ENCODE measurements at regions of chr6 and their contacts with region 1.

Region 1: DNA sequence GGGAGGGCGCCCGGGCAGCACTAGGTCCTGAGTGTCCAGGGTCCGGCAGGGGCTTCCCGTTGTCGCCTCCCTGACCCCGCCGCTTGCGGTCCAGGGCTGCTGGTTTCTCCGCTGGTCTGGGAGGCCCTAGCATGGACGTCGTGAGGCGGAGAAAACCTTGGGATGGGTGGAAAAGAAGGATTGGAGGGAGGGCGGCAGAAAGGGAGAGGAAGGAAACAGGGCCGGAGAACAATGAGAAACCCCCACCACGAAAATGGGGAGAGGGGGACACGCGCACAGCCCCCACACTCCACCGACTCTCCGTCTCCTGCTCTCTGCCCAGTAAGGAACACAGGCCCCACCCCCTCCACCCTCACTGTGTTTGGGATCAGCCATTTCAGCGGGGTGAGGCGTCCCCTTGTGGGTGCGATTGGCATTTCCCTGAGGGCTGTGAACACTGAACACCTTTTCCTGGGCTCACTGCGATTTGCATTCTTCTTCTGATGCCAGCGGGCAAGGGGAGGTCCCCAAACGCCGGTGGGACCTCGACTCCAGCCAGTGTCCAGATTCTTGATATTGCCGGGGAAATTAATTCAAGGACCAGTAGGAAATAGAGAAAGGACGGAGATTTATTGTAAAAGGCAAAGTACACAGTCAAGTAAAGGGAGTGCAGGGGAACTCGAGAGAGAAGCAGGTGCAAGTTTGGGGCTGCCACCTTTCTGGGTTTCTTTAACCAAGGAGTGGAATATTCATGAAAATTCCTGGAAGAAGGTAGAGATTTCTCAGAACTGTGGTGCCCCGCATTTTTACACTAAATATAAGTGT is 3.3 kb upstream of the RAET1G start:
- DNase-seq: peak; percentile 75
- H3K4me3 ChIP-seq: peak overlapping the region; percentile 14 to 44 (median 35)
- H3K27ac ChIP-seq: no peak overlapping the region
- H3K4me1 ChIP-seq: peaks cover 18% of the 10 kb centered on the region
- H3K27me3 ChIP-seq: no peaks in the 10 kb centered on the region
- CTCF ChIP-seq: peak; percentile 91 to 97

Region 2: DNA sequence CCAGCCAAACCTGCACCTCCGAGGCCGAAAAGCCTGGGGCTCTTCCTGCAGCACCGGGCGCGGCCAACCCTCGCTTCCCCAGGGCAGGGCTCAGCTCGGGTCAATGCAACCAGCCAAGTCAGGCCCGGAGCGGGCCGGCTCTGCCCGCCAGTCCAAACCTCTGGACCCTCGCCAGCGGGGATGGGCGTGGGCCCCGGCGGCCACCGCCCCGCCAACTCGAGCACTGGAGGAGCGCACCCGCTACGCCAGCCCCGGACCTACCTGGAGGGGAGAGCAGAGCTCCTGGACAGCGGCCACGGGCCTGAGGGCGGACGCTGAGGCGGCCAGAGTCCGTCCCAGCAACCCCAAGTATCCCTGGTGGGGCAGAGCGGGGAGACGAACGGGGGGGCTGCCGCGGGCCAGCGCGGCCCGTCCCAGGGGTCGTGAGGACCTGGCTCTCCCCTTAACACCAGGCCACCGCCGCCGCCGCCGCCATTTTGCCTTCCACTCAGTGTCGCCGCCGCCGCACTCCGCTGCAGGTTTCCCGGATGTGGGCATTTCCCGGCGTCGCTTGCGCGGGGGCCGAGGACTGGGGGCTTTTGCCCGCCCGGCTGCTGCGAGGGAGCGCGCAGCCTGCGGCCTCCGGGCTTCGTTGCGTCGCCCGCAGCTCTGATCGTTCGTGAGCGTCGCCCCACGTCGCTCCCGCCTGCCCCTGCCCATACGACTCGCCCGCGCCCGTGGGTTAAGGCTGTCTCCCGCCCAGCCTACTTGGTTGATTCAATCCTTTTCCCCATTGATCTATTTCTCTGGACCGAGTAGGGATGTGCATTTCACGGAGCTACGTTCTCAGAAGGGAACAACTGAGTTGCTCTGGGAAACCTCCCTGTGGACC is 208.4 kb before region 1 on chr6 and contains the start of gene LATS1:
- CTCF ChIA-PET with region 1: no interaction called
- dilution Hi-C with region 1: no loop called
- in situ Hi-C with region 1: loop called in 1 of 2 experiments (anchors 10 kb)
- intact Hi-C with region 1: loop called (anchors 1 kb)
- DNase-seq: peak; percentile 91
- H3K4me3 ChIP-seq: peak within 1 kb of the TSS; percentile 66 to 92 (median 91)
- H3K27ac ChIP-seq: peak within 1 kb of the TSS; percentile 86
- H3K4me1 ChIP-seq: no peaks in the 10 kb centered on the region
- H3K27me3 ChIP-seq: no peaks in the 10 kb centered on the region
- CTCF ChIP-seq: no peak
- total RNA-seq, gene LATS1: 19.8 to 26.6 TPM

Region 3: DNA sequence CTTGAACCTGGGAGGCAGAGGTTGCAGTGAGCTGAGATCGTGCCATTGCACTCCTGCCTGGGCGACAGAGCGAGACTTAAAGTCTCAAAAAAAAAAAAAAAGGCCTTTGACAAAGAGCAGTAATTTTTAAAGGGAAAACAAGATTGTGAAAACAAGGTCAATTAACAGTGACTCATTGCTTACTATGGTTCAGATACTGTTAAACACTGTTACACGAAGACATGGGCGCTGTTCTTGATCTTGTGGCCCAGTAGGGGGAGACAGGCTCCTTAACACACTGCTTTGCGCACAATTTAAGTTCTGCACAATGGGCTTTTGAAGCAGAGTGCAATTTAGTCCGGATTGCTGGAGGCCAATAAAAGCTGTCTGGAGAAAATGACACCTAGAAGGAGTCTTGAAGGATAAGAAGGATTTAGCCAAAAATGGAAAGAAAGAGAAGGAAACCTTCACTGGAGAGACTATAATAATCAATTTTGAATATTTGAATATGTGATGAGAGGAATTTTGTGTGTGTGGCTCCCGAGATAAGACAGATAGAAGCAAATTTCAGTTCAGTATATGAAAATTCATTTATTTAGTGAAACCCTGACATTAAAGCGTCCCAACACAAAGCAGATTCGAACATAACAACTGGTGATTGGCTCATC is 202.3 kb before region 1 on chr6:
- CTCF ChIA-PET with region 1: no interaction called
- dilution Hi-C with region 1: no loop called
- in situ Hi-C with region 1: loop called in 1 of 2 experiments (anchors 10 kb)
- intact Hi-C with region 1: loop called (anchors 1 kb)
- DNase-seq: peak; percentile 74
- H3K4me3 ChIP-seq: no peak overlapping the region
- H3K27ac ChIP-seq: no peak overlapping the region
- H3K4me1 ChIP-seq: no peaks in the 10 kb centered on the region
- H3K27me3 ChIP-seq: no peaks in the 10 kb centered on the region
- CTCF ChIP-seq: peak; percentile 89 to 92

Region 4: GRCh38 chr6:149834513-149835481 is 91.4 kb before region 1 on chr6:
- CTCF ChIA-PET with region 1: interaction called, 4 read pairs
- dilution Hi-C with region 1: no loop called
- in situ Hi-C with region 1: no loop called
- intact Hi-C with region 1: loop called (anchors 1 kb)
- DNase-seq: peak; percentile 84
- H3K4me3 ChIP-seq: no peak overlapping the region
- H3K27ac ChIP-seq: peak overlapping the region; percentile 49
- H3K4me1 ChIP-seq: peaks cover 21% of the 10 kb centered on the region
- H3K27me3 ChIP-seq: no peaks in the 10 kb centered on the region
- CTCF ChIP-seq: peak; percentile 86 to 87

Region 5: GRCh38 chr6:149840345-149841075 is 85.7 kb before region 1 on chr6:
- CTCF ChIA-PET with region 1: interaction called, 4 read pairs
- dilution Hi-C with region 1: no loop called
- in situ Hi-C with region 1: loop called (anchors 5 kb)
- intact Hi-C with region 1: loop called (anchors 1 kb)
- DNase-seq: peak; percentile 70
- H3K4me3 ChIP-seq: no peak overlapping the region
- H3K27ac ChIP-seq: no peak overlapping the region
- H3K4me1 ChIP-seq: peaks cover 15% of the 10 kb centered on the region
- H3K27me3 ChIP-seq: no peaks in the 10 kb centered on the region
- CTCF ChIP-seq: peak; percentile 73 to 89

Region 6: DNA sequence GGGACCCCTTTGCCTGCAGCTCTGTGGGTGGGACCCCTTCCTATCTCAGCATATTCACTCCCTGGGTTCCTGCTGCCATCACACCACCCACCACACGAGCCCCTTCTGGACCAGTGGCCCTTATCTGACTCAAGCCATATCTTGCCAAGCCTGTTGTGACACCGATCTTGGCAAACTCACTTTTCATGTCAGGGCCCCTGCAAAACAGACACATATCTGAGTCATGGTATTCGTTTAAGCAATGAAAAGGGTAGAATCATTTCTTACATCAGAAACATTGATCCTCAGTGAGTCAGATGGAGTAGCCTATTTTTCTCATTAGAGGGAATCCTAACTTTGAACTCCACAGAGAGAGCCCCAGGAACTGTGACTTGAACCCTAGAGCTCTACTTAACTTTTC is 38.8 kb before region 1 on chr6:
- CTCF ChIA-PET with region 1: interaction called, 4 read pairs
- dilution Hi-C with region 1: no loop called
- in situ Hi-C with region 1: no loop called
- intact Hi-C with region 1: loop called (anchors 1 kb)
- DNase-seq: peak; percentile 94
- H3K4me3 ChIP-seq: no peak overlapping the region
- H3K27ac ChIP-seq: peak overlapping the region; percentile 82
- H3K4me1 ChIP-seq: peaks cover 69% of the 10 kb centered on the region
- H3K27me3 ChIP-seq: no peaks in the 10 kb centered on the region
- CTCF ChIP-seq: no peak

Region 7: DNA sequence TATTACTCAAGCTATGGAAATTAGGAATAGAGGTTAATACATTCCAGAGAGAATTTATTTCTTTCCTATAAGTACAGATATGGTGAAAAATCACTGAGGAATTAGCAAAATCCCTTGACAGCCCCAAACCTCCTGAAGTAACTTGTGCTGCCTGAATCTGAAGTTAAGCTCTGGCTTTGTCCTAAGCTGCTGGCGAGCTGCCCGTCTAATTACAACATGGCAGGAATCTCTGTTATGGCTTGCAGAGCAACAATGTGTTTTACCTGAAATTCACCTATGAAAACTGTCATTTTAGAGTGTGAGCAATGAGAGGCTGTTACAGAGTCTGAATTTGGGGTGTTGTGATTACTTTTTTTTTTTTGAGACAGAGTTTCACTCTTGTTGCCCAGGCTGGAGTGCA is 420.2 kb after region 1 on chr6:
- CTCF ChIA-PET with region 1: no interaction called
- dilution Hi-C with region 1: no loop called
- in situ Hi-C with region 1: no loop called
- intact Hi-C with region 1: no loop called
- DNase-seq: peak; percentile 68
- H3K4me3 ChIP-seq: no peak overlapping the region
- H3K27ac ChIP-seq: no peak overlapping the region
- H3K4me1 ChIP-seq: peaks cover 18% of the 10 kb centered on the region
- H3K27me3 ChIP-seq: no peaks in the 10 kb centered on the region
- CTCF ChIP-seq: no peak

Region 8: GRCh38 chr6:150528648-150529285 is 602.6 kb after region 1 on chr6:
- CTCF ChIA-PET with region 1: no interaction called
- dilution Hi-C with region 1: no loop called
- in situ Hi-C with region 1: no loop called
- intact Hi-C with region 1: no loop called
- DNase-seq: peak; percentile 22
- H3K4me3 ChIP-seq: no peak overlapping the region
- H3K27ac ChIP-seq: no peak overlapping the region
- H3K4me1 ChIP-seq: no peaks in the 10 kb centered on the region
- H3K27me3 ChIP-seq: no peaks in the 10 kb centered on the region
- CTCF ChIP-seq: no peak

Region 9: GRCh38 chr6:150692604-150693003 is 766.4 kb after region 1 on chr6:
- CTCF ChIA-PET with region 1: no interaction called
- dilution Hi-C with region 1: no loop called
- in situ Hi-C with region 1: no loop called
- intact Hi-C with region 1: no loop called
- DNase-seq: no peak
- H3K4me3 ChIP-seq: no peak overlapping the region
- H3K27ac ChIP-seq: no peak overlapping the region
- H3K4me1 ChIP-seq: no peaks in the 10 kb centered on the region
- H3K27me3 ChIP-seq: no peaks in the 10 kb centered on the region
- CTCF ChIP-seq: no peak